ENCODE measurements at regions of chr10 and their contacts with region 1.

Region 1: DNA sequence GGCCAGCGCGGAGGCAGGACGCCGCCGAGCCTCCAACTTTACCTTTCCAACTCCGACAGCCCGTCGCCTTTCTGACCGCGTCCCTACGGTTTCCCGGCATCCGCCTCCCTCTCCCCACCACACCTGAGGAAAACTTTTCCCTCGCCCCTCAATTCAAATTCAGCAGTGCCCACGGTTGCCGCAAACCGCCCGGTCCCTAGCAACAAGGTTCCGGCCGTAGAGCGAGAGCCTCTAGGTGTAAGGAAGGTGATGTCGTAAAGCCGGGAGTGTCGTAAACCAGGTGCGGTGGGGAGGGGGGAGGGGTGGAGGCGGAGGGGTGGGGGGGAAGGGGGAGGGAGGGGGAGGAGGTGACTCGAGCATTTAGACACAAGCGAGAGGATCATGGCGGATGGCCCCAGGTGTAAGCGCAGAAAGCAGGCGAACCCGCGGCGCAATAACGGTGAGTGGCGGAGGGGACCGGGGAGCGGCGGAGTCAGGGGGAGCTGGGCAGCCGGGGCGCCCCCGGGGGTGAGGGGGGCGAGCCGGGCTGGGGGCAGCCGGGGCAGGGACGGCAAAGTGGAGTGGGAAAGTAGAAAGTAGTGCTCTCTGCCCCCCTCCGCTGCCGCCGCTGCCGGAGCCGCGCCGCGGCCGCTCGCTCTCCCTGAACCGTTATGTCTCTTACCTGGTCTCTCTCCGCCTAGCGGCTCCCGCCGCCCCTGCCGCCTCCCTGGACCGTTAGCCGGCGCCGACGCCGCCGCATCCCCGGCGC is at the start of gene ZEB1:
- DNase-seq: peak; percentile 96
- H3K4me3 ChIP-seq: peak within 1 kb of the TSS; percentile 59 to 95 (median 88)
- H3K27ac ChIP-seq: peak within 1 kb of the TSS; percentile 93 to 99 (median 98)
- H3K4me1 ChIP-seq: peaks cover 8 to 54% (median 37%) of the 10 kb centered on the region in 6 donors
- H3K27me3 ChIP-seq: peaks cover 0 to 22% (median 0%) of the 10 kb centered on the region in 7 donors
- CTCF ChIP-seq: peak in 9 of 11 experiments; percentile 38 to 74 (median 59)
- POLR2A ChIP-seq: no peak
- total RNA-seq, gene ZEB1: 41.6 to 51.8 (median 46.0) TPM

Region 2: GRCh38 chr10:31669357-31669756 is 350.3 kb after region 1 on chr10:
- intact Hi-C with region 1: no loop called
- DNase-seq: no peak
- H3K4me3 ChIP-seq: no peak overlapping the region
- H3K27ac ChIP-seq: no peak overlapping the region
- H3K4me1 ChIP-seq: no peaks in the 10 kb centered on the region
- H3K27me3 ChIP-seq: no peaks in the 10 kb centered on the region
- CTCF ChIP-seq: no peak
- POLR2A ChIP-seq: no peak

Region 3: GRCh38 chr10:31759799-31760626 is 441.0 kb after region 1 on chr10:
- intact Hi-C with region 1: loop called (anchors 10 kb)
- DNase-seq: peak; percentile 98
- H3K4me3 ChIP-seq: peak overlapping the region; percentile 62 to 95 (median 78)
- H3K27ac ChIP-seq: peak overlapping the region; percentile 87 to 94 (median 93)
- H3K4me1 ChIP-seq: peaks cover 4 to 24% (median 17%) of the 10 kb centered on the region in 6 donors
- H3K27me3 ChIP-seq: no peaks in the 10 kb centered on the region
- CTCF ChIP-seq: peak in 2 of 11 experiments; percentile 26 to 28
- POLR2A ChIP-seq: peak in 2 of 3 donors; percentile 44 to 88

Measured in spleen (tissue), 13 donors.